ENCODE measurements at regions of chr16 and their contacts with region 1.

Region 1: GRCh38 chr16:5024632-5025031 is 9.1 kb downstream of the NAGPA start:
- DNase-seq: no peak
- ATAC-seq: peak in 5 of 8 donors; percentile 35 to 61 (median 40)
- H3K4me3 ChIP-seq: no peak overlapping the region
- H3K27ac ChIP-seq: no peak overlapping the region
- H3K4me1 ChIP-seq: peaks cover 0 to 13% (median 0%) of the 10 kb centered on the region in 9 donors
- H3K27me3 ChIP-seq: no peaks in the 10 kb centered on the region
- CTCF ChIP-seq: peak in 2 of 9 donors; percentile 15 to 24

Region 2: GRCh38 chr16:4968879-4969456 is 55.7 kb before region 1 on chr16:
- intact Hi-C with region 1: loop called in 1 of 10 experiments (anchors 5 kb)
- DNase-seq: no peak
- ATAC-seq: peak in 1 of 8 donors; percentile 27
- H3K4me3 ChIP-seq: no peak overlapping the region
- H3K27ac ChIP-seq: peak overlapping the region in 2 of 10 donors; percentile 40 to 53
- H3K4me1 ChIP-seq: peaks cover 0 to 4% (median 0%) of the 10 kb centered on the region in 9 donors
- H3K27me3 ChIP-seq: peaks cover 0 to 9% (median 0%) of the 10 kb centered on the region in 7 donors
- CTCF ChIP-seq: no peak